ENCODE measurements at regions of chr22 and their contacts with region 1.

Region 1: GRCh38 chr22:37330200-37331033 is 48.1 kb downstream of the CYTH4 start:
- DNase-seq: peak; percentile 97
- H3K4me3 Mint-ChIP-seq: no peak overlapping the region
- H3K27ac Mint-ChIP-seq: peak overlapping the region; percentile 33
- H3K4me1 Mint-ChIP-seq: peaks cover 28% of the 10 kb centered on the region
- H3K27me3 Mint-ChIP-seq: no peaks in the 10 kb centered on the region
- CTCF ChIP-seq: no peak

Region 2: DNA sequence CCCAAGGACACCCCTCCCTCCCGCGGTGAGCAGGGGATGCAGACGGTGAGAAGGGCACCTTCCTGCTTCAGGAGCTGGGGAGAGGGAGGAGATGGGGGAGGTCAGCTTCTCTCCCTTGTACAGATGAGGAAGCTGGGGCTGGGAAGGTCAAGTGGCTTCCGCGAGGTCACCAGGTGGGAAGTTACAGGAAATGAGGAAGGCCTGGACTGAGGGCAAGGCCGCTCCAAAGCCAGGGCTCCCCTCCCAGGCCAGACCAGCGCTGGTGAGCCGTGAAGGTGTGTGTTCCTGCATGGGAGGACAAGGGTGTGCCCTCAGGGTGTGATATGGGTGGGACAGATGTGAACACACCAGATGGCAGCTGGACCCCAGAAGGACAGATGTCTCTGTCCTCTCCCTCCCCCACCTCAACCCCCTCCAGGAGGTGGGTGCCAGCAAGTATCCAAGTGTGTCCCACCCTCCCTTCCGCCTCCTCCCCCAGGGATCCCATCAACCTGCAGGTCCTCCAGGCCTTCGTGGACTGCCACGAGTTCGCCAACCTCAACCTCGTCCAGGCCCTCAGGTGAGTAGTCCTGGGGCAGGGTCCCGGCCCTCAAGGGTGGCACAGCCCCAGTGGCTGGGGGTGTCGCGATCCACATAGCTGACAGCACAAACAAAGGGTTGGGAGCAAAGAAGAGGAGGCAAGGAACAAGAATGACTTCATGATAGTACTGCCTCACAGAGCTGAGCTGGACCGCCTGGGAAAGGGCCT is 31.5 kb before region 1 on chr22:
- CTCF ChIA-PET with region 1: no interaction called
- POLR2A ChIA-PET with region 1: no interaction called
- intact Hi-C with region 1: no loop called
- DNase-seq: no peak
- H3K4me3 Mint-ChIP-seq: no peak overlapping the region
- H3K27ac Mint-ChIP-seq: no peak overlapping the region
- H3K4me1 Mint-ChIP-seq: peaks cover 10% of the 10 kb centered on the region
- H3K27me3 Mint-ChIP-seq: no peaks in the 10 kb centered on the region
- CTCF ChIP-seq: no peak

Region 3: DNA sequence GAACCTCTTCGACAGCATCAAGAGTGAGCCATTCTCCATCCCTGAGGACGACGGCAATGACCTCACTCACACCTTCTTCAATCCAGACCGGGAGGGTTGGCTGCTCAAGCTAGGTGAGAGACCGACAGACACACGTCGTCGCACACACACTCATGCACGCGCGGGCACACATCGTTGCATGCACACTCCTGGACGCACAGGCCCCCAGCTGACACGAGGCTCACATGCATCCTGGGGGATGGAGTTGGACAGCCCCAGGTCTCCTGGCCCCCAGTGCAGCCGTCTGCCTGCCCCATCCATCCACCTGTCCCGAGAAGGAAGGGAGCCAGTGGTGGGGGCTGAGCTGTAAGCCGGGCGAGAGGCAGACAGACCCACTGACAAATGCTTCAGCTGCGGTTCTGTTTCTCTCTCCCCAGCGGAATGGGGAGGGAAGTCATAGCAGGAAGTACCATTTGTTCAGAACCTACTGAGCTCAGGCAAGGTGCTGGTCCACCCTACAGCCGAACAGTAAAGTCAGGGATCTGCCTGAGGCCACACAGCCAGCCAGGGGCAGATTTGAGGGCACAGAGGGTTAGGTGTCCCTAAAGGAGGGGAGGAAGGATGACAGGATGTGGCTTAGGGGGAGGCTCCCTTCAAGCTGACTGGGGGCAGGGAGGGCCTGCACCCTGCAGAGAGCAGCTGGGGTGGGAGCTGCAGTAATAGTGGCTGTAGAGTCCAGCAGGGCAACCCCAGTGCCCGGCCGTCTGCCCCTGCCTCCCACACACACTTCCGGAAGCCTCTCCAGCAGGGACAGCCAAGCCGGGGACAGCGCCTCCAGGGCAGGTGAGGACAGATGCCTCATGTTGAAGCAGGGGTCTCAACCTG is 21.0 kb before region 1 on chr22:
- CTCF ChIA-PET with region 1: no interaction called
- POLR2A ChIA-PET with region 1: no interaction called
- intact Hi-C with region 1: no loop called
- DNase-seq: no peak
- H3K4me3 Mint-ChIP-seq: no peak overlapping the region
- H3K27ac Mint-ChIP-seq: no peak overlapping the region
- H3K4me1 Mint-ChIP-seq: peaks cover 53% of the 10 kb centered on the region
- H3K27me3 Mint-ChIP-seq: no peaks in the 10 kb centered on the region
- CTCF ChIP-seq: no peak

Region 4: GRCh38 chr22:37428649-37429586 is 98.5 kb after region 1 on chr22:
- CTCF ChIA-PET with region 1: interaction called, 5 read pairs
- POLR2A ChIA-PET with region 1: no interaction called
- intact Hi-C with region 1: loop called (anchors 1 kb)
- DNase-seq: peak; percentile 59
- H3K4me3 Mint-ChIP-seq: peak overlapping the region; percentile 46
- H3K27ac Mint-ChIP-seq: no peak overlapping the region
- H3K4me1 Mint-ChIP-seq: peaks cover 34% of the 10 kb centered on the region
- H3K27me3 Mint-ChIP-seq: no peaks in the 10 kb centered on the region
- CTCF ChIP-seq: peak; percentile 43

Measured in MCF 10A (cell line).